Endothelial cell of umbilical vein (primary cell): ENCODE measurements at regions of chr10 and their contacts with region 1.

Region 1: GRCh38 chr10:69515699-69516259 is 57.4 kb downstream of the NEUROG3 start:
- DNase-seq: peak; percentile 69
- H3K4me3 ChIP-seq: no peak overlapping the region
- H3K27ac ChIP-seq: no peak overlapping the region
- H3K4me1 ChIP-seq: no peaks in the 10 kb centered on the region
- H3K27me3 ChIP-seq: peaks cover 0 to 2% of the 10 kb centered on the region in 2 experiments
- CTCF ChIP-seq: peak; percentile 83 to 92
- POLR2A ChIP-seq: no peak

Region 2: DNA sequence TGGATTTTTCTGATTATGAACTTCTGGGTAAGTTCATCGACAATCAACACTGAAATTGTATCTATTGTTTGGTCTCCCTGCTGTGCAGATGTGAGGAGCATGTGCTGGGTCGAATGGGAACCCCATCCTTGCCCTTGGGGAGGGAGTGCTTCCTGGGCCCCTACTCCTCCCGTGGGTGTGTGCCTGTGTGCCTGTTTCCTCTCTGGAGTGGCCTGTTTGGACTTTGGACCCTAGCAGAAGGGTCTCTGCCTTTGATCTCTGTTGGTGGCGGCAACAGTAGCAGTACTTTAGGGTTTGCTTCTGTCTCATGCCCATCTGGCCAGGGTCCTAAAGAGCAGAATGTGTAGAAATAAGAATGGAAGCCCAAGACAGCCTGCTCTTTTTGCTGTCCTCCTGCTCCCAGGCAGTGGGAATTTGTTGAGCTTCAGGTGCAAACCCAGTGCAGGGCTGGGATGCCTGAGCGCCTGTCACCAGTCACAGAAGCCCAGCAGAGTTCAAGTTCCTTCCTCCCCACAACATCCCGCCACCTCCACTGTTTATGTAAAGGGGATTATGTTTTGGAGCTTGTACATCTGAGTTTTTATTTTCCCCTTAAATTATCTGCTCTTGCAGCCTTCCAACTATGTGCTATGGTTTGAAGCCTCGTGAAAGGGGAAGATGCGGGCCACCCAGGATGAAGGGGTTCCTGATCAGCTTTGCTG is 97.6 kb before region 1 on chr10:
- CTCF ChIA-PET with region 1: interaction called, 10 read pairs
- POLR2A ChIA-PET with region 1: no interaction called
- dilution Hi-C with region 1: no loop called
- intact Hi-C with region 1: no loop called
- DNase-seq: no peak
- H3K4me3 ChIP-seq: no peak overlapping the region
- H3K27ac ChIP-seq: no peak overlapping the region
- H3K4me1 ChIP-seq: no peaks in the 10 kb centered on the region
- H3K27me3 ChIP-seq: peaks cover 0 to 1% of the 10 kb centered on the region in 2 experiments
- CTCF ChIP-seq: no peak
- POLR2A ChIP-seq: no peak

Region 3: GRCh38 chr10:69486922-69487666 is 28.7 kb before region 1 on chr10:
- CTCF ChIA-PET with region 1: interaction called, 12 read pairs
- POLR2A ChIA-PET with region 1: no interaction called
- dilution Hi-C with region 1: no loop called
- intact Hi-C with region 1: no loop called
- DNase-seq: no peak
- H3K4me3 ChIP-seq: no peak overlapping the region
- H3K27ac ChIP-seq: no peak overlapping the region
- H3K4me1 ChIP-seq: peaks cover 8% of the 10 kb centered on the region
- H3K27me3 ChIP-seq: no peaks in the 10 kb centered on the region
- CTCF ChIP-seq: no peak
- POLR2A ChIP-seq: no peak

Region 4: GRCh38 chr10:69527961-69528360 is 12.2 kb after region 1 on chr10:
- CTCF ChIA-PET with region 1: interaction called, 25 read pairs
- POLR2A ChIA-PET with region 1: no interaction called
- dilution Hi-C with region 1: no loop called
- intact Hi-C with region 1: loop called (anchors 1 kb)
- DNase-seq: no peak
- H3K4me3 ChIP-seq: no peak overlapping the region
- H3K27ac ChIP-seq: no peak overlapping the region
- H3K4me1 ChIP-seq: no peaks in the 10 kb centered on the region
- H3K27me3 ChIP-seq: peaks cover 4 to 10% of the 10 kb centered on the region in 2 experiments
- CTCF ChIP-seq: no peak
- POLR2A ChIP-seq: no peak

Region 5: DNA sequence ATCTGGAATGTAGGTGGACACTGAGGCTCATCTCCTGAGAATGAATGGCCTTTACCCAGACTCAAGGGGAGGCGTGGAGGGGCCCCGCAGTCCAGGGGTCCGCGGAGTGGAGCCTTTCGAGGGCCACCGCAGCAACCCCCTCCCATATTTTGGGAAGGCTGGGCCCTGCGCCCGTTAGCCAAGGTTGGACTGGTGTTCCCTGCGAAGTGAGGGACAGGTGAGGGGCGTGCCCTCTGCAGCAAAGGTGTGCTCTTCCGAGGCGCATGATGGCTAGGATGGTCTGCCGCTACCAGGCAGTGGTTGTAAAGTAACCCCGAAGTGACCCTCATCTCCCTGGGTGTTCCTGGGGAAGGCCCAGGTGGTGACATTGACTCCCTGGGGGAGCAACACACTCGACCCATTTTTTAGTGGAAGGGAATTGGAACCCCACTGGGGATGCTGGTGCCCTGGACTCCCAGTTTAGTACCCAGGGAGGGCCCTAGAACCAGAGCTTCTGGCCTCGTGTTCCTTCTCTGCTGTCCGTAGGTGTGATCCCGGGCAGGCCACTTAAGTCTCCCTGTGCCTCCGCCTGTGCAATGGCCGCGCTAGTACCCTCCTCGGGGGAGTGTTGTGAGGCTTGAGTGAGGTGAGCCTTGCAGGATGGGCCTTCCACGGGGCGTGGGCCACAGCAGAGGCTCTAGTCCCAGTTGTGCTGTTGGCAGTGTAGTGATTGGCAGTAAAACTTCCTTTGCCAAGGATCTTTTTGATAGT is 115.0 kb after region 1 on chr10:
- CTCF ChIA-PET with region 1: interaction called, 276 read pairs
- POLR2A ChIA-PET with region 1: no interaction called
- dilution Hi-C with region 1: no loop called
- intact Hi-C with region 1: no loop called
- DNase-seq: no peak
- H3K4me3 ChIP-seq: no peak overlapping the region
- H3K27ac ChIP-seq: no peak overlapping the region
- H3K4me1 ChIP-seq: peaks cover 2% of the 10 kb centered on the region
- H3K27me3 ChIP-seq: peaks cover 20 to 30% of the 10 kb centered on the region in 2 experiments
- CTCF ChIP-seq: no peak
- POLR2A ChIP-seq: no peak

Region 6: DNA sequence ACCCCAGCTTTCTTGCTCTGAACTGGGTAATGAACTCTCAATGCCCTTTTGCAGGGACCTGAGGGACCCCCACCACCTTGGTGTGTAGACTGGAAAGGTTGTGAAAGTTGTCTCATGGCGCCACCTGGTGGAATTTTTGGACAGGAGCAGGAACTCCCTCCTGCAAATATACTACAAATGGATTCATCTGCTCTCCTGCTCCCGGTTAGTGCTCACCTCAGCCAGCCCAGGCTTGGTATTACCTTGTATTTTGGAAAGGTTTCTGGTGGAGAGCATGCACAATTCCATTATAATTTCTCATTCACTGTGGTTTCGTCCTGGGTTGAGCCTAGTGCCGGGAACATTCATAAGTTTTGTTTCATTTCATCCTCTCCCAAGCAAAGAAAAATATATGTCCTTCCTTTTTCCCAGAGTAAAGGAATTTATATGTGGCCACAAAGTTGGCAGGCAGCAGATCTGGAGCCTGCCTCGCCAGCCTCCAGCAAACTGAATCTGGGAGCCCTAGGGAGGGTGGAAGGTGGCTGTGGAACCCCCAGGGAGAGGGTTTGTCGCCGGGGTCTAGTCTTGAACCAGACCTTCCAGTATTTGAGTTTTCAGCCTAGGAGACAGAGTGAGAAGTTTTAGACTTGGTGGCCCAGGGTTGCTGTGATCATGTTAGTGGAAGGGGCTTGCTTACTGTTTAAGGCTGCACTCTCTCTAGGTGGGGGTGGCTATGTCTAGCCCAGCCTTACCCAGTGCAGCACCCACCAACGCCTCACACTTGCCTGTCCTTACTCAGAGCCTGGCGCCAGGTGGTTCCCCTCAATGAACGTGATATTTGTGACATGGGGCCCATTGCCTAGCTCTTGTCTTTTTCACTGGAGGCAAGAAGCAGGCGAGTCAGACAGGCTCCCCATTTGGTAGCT is 123.8 kb after region 1 on chr10:
- CTCF ChIA-PET with region 1: interaction called, 276 read pairs
- POLR2A ChIA-PET with region 1: no interaction called
- dilution Hi-C with region 1: no loop called
- intact Hi-C with region 1: loop called (anchors 1 kb)
- DNase-seq: peak; percentile 58
- H3K4me3 ChIP-seq: no peak overlapping the region
- H3K27ac ChIP-seq: no peak overlapping the region
- H3K4me1 ChIP-seq: no peaks in the 10 kb centered on the region
- H3K27me3 ChIP-seq: peaks cover 3 to 9% of the 10 kb centered on the region in 2 experiments
- CTCF ChIP-seq: peak; percentile 78 to 82
- POLR2A ChIP-seq: no peak

Region 7: GRCh38 chr10:69663369-69663947 is 147.7 kb after region 1 on chr10:
- CTCF ChIA-PET with region 1: no interaction called
- POLR2A ChIA-PET with region 1: no interaction called
- dilution Hi-C with region 1: no loop called
- intact Hi-C with region 1: no loop called
- DNase-seq: no peak
- H3K4me3 ChIP-seq: no peak overlapping the region
- H3K27ac ChIP-seq: no peak overlapping the region
- H3K4me1 ChIP-seq: no peaks in the 10 kb centered on the region
- H3K27me3 ChIP-seq: peaks cover under 1 to 27% of the 10 kb centered on the region in 2 experiments
- CTCF ChIP-seq: no peak
- POLR2A ChIP-seq: no peak

Region 8: DNA sequence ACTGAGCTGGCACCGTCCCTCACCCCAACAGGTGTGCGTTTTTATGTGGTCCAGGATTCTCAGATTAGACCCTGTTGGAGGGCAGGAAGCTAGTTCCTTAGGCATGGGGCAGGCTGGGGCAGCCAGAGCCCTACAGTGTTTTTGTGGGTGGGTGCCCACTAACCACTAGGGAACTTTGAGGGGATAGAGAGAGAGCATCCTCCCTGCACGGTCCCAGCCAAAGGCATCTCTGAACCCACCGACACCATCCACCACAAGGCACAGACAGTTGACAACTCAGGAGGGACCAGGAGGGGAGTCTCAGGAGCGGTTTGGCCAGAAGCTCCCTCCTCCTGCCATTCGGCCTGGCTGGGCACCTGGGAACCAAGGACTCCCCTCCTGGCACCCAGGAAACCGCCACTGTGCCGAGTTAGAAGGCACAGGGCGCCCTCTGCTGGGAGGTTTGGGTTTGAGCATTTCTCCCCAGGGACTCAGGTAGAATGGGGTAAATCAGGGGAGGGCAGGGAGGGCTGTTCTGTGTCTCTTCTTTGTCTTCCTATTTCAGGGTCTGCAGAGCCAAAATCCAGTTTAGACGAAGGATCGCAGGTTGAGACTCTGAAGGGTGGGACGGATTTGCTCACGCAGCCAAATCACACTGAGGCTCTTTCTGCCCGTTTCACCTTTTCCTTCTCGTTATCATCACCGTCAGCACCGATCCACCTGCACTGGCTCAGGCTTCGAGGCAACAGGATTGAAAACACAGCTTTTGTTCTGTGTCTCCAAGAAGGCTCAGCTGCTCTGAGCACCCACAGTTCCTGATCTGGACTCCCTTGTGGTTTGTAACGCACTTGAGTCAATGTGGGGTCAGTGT is 201.2 kb after region 1 on chr10:
- CTCF ChIA-PET with region 1: interaction called, 10 read pairs
- POLR2A ChIA-PET with region 1: no interaction called
- dilution Hi-C with region 1: no loop called
- intact Hi-C with region 1: no loop called
- DNase-seq: no peak
- H3K4me3 ChIP-seq: no peak overlapping the region
- H3K27ac ChIP-seq: no peak overlapping the region
- H3K4me1 ChIP-seq: peaks cover 6% of the 10 kb centered on the region
- H3K27me3 ChIP-seq: peaks cover 0 to 2% of the 10 kb centered on the region in 2 experiments
- CTCF ChIP-seq: peak; percentile 65 to 80
- POLR2A ChIP-seq: no peak